ENCODE measurements at regions of chr5 and their contacts with region 1.

Region 1: GRCh38 chr5:59367791-59368394 is 525.6 kb downstream of the PDE4D start:
- DNase-seq: peak; percentile 66
- ATAC-seq: no peak
- H3K4me3 Mint-ChIP-seq: no peak overlapping the region
- H3K27ac Mint-ChIP-seq: no peak overlapping the region
- H3K4me1 Mint-ChIP-seq: peaks cover 3% of the 10 kb centered on the region
- H3K27me3 Mint-ChIP-seq: peaks cover 10% of the 10 kb centered on the region
- CTCF ChIP-seq: peak; percentile 75

Region 2: DNA sequence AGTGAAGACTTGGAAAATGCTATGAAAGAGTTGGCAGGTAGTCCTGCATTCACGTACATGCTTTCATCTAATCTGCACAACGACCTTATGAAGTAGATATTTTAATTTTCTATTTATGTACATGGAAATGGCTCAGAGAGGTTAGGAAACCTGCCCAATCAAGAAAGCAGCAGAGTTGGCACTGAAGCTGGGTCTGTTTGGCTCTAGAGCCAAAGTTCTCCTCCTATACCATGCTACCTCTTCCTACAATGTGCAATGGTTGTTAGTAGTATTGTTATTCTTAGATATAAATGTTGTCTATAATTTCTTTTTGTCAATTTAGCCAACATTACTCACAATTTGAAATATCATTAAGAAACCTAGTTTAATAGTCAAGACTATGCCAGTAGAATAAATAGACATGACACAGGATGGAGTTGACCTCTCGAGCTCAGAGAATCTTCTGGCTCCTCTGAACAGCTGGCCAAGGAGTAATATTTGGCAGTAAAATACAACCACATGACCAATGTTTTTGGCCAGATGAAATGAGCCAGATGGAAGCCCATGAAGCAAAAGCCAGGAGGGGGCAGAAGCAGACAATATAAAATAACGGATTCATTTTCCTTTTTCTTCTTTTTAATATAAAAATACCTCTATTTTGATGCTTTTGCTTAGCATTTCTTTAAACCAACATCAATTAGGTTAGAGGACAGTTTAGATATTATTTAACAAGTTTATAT is 16.7 kb before region 1 on chr5:
- CTCF ChIA-PET with region 1: interaction called, 18 read pairs
- POLR2A ChIA-PET with region 1: no interaction called
- intact Hi-C with region 1: no loop called
- DNase-seq: no peak
- ATAC-seq: no peak
- H3K4me3 Mint-ChIP-seq: no peak overlapping the region
- H3K27ac Mint-ChIP-seq: no peak overlapping the region
- H3K4me1 Mint-ChIP-seq: no peaks in the 10 kb centered on the region
- H3K27me3 Mint-ChIP-seq: peaks cover 9% of the 10 kb centered on the region
- CTCF ChIP-seq: no peak

Region 3: DNA sequence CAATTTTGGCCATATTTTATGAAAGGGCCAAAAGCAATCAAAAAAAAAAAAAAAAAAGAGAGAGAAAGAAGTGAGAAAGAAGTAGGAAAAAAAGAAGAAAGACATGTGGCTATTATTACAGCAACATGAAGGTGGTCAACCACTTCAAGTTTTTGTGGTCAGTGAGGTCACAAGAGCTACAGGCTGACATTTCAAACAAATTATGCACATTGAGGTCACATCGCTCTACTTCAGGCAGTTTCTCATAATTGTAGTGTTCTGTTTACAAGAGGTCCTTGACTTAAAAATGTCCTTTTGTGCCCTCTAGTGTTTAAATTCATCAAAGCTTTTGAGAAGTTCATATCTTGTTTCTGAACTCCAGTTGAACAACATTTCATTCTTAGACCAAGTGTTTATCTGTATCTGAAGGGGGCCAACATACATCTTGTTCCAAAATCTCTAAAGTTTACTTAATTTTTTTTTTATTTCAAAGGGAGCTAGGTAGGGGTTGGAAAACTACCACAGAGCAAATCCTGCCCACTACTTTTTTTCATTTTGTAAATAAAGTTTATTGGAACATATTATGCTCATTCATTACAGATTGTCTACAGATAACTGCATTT is 12.6 kb after region 1 on chr5:
- CTCF ChIA-PET with region 1: interaction called, 16 read pairs
- POLR2A ChIA-PET with region 1: no interaction called
- intact Hi-C with region 1: no loop called
- DNase-seq: peak; percentile 69
- ATAC-seq: peak; percentile 89
- H3K4me3 Mint-ChIP-seq: no peak overlapping the region
- H3K27ac Mint-ChIP-seq: no peak overlapping the region
- H3K4me1 Mint-ChIP-seq: peaks cover 4% of the 10 kb centered on the region
- H3K27me3 Mint-ChIP-seq: peaks cover 4% of the 10 kb centered on the region
- CTCF ChIP-seq: peak; percentile 72

Region 4: GRCh38 chr5:59390074-59390659 is 22.3 kb after region 1 on chr5:
- CTCF ChIA-PET with region 1: interaction called, 11 read pairs
- POLR2A ChIA-PET with region 1: no interaction called
- intact Hi-C with region 1: no loop called
- DNase-seq: peak; percentile 19
- ATAC-seq: no peak
- H3K4me3 Mint-ChIP-seq: no peak overlapping the region
- H3K27ac Mint-ChIP-seq: no peak overlapping the region
- H3K4me1 Mint-ChIP-seq: no peaks in the 10 kb centered on the region
- H3K27me3 Mint-ChIP-seq: peaks cover 4% of the 10 kb centered on the region
- CTCF ChIP-seq: peak; percentile 93